CD4-positive, alpha-beta memory T cell (primary cell): ENCODE measurements at regions of chr14 and their contacts with region 1.

Region 1: DNA sequence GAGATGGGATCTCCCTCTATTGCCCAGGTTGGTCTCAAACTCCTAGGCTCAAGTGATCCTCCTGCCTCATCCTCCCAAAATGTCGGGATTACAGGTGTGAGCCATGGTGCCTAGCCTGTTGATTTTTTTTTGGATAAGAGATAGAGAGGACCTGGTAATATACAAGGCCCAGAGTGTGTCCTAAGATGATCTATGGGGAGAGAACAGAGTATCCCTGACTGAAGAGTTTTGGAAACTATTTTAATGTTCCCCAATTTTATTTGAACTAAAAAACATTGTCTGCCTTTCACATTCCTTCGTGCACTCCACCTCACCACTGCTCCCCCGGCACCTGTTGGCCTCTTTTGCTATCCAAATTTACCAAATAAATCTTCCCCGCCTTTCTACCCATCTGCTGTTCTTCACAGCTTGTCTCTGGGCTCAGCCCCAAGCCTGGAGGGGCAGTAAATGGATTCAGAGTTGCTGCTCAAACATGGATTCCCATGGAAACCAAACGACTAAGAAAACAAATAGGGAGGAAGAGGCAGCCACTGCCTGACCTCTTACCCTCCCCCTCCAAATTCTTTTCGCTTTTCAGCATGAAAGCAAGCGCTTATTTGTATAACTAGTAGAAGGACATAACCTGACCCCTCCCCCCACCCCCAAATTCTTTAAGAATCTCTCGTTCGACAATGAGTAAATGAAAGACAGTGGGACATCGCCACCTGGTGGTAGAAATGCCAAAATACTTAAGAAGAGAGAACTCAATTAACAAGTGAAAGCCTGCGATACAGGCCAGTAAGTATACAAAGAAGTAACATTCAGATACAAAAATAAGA is 22.6 kb downstream of the OR10G3 start:
- DNase-seq: peak; percentile 71 to 77 (median 75)
- H3K4me3 ChIP-seq: peak overlapping the region in 1 of 2 donors; percentile 35
- H3K4me3 Mint-ChIP-seq: peak overlapping the region in 7 of 8 donors; percentile 0 to 58 (median 6)
- H3K27ac ChIP-seq: no peak overlapping the region
- H3K27ac Mint-ChIP-seq: peak overlapping the region in 5 of 7 donors; percentile 3 to 90 (median 83)
- H3K4me1 ChIP-seq: peaks cover 6% of the 10 kb centered on the region
- H3K4me1 Mint-ChIP-seq: peaks cover 4 to 11% (median 6%) of the 10 kb centered on the region in 4 donors
- H3K27me3 ChIP-seq: no peaks in the 10 kb centered on the region
- H3K27me3 Mint-ChIP-seq: no peaks in the 10 kb centered on the region

Region 2: GRCh38 chr14:21352587-21352986 is 204.7 kb before region 1 on chr14:
- CTCF ChIA-PET with region 1: no interaction called
- POLR2A ChIA-PET with region 1: no interaction called
- intact Hi-C with region 1: loop called (anchors 10 kb)
- DNase-seq: no peak
- H3K4me3 ChIP-seq: no peak overlapping the region
- H3K4me3 Mint-ChIP-seq: no peak overlapping the region
- H3K27ac ChIP-seq: no peak overlapping the region
- H3K27ac Mint-ChIP-seq: peak overlapping the region in 3 of 7 donors; percentile 7 to 85 (median 75)
- H3K4me1 ChIP-seq: no peaks in the 10 kb centered on the region
- H3K4me1 Mint-ChIP-seq: no peaks in the 10 kb centered on the region
- H3K27me3 ChIP-seq: no peaks in the 10 kb centered on the region
- H3K27me3 Mint-ChIP-seq: no peaks in the 10 kb centered on the region

Region 3: GRCh38 chr14:21575661-21576060 is 18.4 kb after region 1 on chr14:
- CTCF ChIA-PET with region 1: no interaction called
- POLR2A ChIA-PET with region 1: no interaction called
- intact Hi-C with region 1: no loop called
- DNase-seq: no peak
- H3K4me3 ChIP-seq: no peak overlapping the region
- H3K4me3 Mint-ChIP-seq: no peak overlapping the region
- H3K27ac ChIP-seq: no peak overlapping the region
- H3K27ac Mint-ChIP-seq: peak overlapping the region in 1 of 7 donors; percentile 64
- H3K4me1 ChIP-seq: no peaks in the 10 kb centered on the region
- H3K4me1 Mint-ChIP-seq: no peaks in the 10 kb centered on the region
- H3K27me3 ChIP-seq: no peaks in the 10 kb centered on the region
- H3K27me3 Mint-ChIP-seq: peaks cover 15 to 20% of the 10 kb centered on the region in 2 donors